ENCODE measurements at regions of chr1 and their contacts with region 1.

Region 1: DNA sequence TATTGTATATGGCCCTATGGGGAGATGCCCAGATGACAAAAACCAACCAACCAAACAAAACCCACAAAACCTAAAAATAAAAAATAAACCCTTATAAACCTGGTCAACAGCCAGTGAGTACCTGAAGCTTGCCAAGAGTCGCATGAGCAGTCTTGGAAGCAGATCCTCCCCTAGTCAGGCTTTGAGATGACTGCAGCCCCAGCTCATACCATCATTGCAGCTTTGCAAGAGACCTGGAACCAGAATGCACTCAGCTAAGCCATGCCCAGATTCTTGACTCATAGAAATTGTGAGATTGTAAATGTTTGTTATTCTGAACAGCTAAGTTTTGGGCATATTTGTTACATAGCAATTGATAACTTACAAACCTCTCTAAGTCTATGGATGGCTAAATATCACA is 326.8 kb downstream of the HLX start:
- DNase-seq: no peak
- H3K4me3 ChIP-seq: no peak overlapping the region
- H3K27ac ChIP-seq: no peak overlapping the region
- H3K4me1 ChIP-seq: peaks cover 0 to 23% (median 9%) of the 10 kb centered on the region in 4 donors
- H3K27me3 ChIP-seq: no peaks in the 10 kb centered on the region
- CTCF ChIP-seq: no peak

Region 2: GRCh38 chr1:220873868-220874655 is 332.0 kb before region 1 on chr1:
- intact Hi-C with region 1: loop called (anchors 5 kb)
- DNase-seq: no peak
- H3K4me3 ChIP-seq: no peak overlapping the region
- H3K27ac ChIP-seq: no peak overlapping the region
- H3K4me1 ChIP-seq: peaks cover 0 to 16% (median 6%) of the 10 kb centered on the region in 4 donors
- H3K27me3 ChIP-seq: no peaks in the 10 kb centered on the region
- CTCF ChIP-seq: peak; percentile 47 to 67

Region 3: GRCh38 chr1:221053889-221054288 is 152.2 kb before region 1 on chr1:
- intact Hi-C with region 1: no loop called
- DNase-seq: no peak
- H3K4me3 ChIP-seq: no peak overlapping the region
- H3K27ac ChIP-seq: no peak overlapping the region
- H3K4me1 ChIP-seq: no peaks in the 10 kb centered on the region
- H3K27me3 ChIP-seq: no peaks in the 10 kb centered on the region
- CTCF ChIP-seq: no peak

Region 4: GRCh38 chr1:221573756-221574155 is 367.7 kb after region 1 on chr1:
- intact Hi-C with region 1: no loop called
- DNase-seq: no peak
- H3K4me3 ChIP-seq: no peak overlapping the region
- H3K27ac ChIP-seq: no peak overlapping the region
- H3K4me1 ChIP-seq: no peaks in the 10 kb centered on the region
- H3K27me3 ChIP-seq: no peaks in the 10 kb centered on the region
- CTCF ChIP-seq: no peak